SK-N-SH (cell line): ENCODE measurements at regions of chr7 and their contacts with region 1.

Region 1: DNA sequence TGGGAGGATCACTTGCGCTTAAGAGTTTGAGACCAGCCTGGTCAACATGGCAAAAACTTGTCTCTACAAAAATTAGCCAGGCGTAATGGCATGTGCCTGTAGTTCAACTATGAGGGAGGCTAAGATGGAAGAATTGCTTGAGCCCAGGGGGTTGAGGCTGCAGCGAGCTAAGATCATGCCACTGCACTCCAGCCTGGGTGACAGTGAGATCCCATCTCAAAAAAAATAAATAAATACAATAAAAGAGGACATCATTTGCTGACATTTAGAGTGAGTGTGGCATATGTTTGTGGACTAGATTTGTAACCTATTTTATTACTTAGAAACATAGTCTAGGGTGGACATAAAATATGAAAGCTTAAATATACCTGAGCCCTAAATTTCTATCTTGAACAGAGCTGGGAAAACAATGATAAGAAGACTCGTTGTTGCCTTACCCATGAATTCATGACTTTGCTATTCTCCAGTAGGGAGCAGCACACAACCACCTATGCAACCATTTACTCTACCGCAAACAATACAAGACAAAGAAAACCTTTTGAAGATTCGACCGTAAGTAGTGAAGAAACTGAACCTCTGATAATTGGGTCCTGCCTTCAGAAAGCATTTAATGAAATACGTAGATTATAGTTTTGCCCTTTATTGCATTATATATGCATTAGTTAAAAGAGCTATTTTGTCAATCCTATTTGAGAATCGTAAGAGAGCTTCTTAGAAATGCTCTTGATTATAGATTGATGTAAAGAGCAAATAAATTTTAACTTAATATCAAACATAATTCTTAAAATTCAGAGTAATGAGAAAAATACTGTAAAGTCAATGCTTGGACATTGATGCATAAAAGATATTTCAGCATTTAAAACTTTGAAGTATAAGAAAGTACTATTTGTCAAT is 83.5 kb downstream of the GNAT3 start:
- DNase-seq: peak; percentile 37
- H3K4me3 ChIP-seq: no peak overlapping the region
- H3K27ac ChIP-seq: peak overlapping the region in 1 of 2 experiments; percentile 38; a peak in 1 of 4 replicates
- H3K4me1 ChIP-seq: no peaks in the 10 kb centered on the region
- H3K27me3 ChIP-seq: no peaks in the 10 kb centered on the region
- CTCF ChIP-seq: peak; percentile 85
- EP300 ChIP-seq: no peak
- RAD21 ChIP-seq: peak; percentile 93

Region 2: DNA sequence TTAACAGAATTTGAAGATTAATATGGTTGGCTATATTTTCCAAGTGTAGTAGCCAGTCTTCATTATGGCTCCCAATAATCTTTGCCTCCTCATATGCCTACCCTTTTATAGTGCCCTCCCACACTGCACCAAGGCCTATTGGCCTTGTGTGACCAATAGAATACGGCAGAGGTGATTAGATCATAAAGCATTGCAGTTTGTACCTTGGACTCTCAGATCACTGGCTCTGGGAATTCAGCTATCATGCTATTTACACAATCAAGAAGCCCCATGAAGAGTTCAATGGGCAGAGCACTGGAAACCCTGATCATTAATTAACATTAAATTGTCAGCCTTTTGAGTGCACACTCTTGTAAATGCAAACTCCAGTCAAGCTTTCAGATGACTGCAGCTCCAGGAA is 820.4 kb before region 1 on chr7:
- CTCF ChIA-PET with region 1: no interaction called
- POLR2A ChIA-PET with region 1: no interaction called
- DNase-seq: no peak
- H3K4me3 ChIP-seq: no peak overlapping the region
- H3K27ac ChIP-seq: no peak overlapping the region
- H3K4me1 ChIP-seq: peaks cover 5 to 19% of the 10 kb centered on the region in 2 experiments; a peak in 2 of 4 replicates
- H3K27me3 ChIP-seq: no peaks in the 10 kb centered on the region
- CTCF ChIP-seq: no peak
- EP300 ChIP-seq: no peak
- RAD21 ChIP-seq: no peak

Region 3: GRCh38 chr7:80403686-80404241 is 24.6 kb before region 1 on chr7:
- CTCF ChIA-PET with region 1: interaction called, 10 read pairs
- POLR2A ChIA-PET with region 1: no interaction called
- DNase-seq: no peak
- H3K4me3 ChIP-seq: no peak overlapping the region
- H3K27ac ChIP-seq: no peak overlapping the region
- H3K4me1 ChIP-seq: peaks cover 0 to 6% of the 10 kb centered on the region in 2 experiments; a peak in 2 of 4 replicates
- H3K27me3 ChIP-seq: no peaks in the 10 kb centered on the region
- CTCF ChIP-seq: no peak
- EP300 ChIP-seq: no peak
- RAD21 ChIP-seq: no peak

Region 4: GRCh38 chr7:80453699-80454340 is 25.4 kb after region 1 on chr7:
- CTCF ChIA-PET with region 1: interaction called, 17 read pairs
- POLR2A ChIA-PET with region 1: no interaction called
- DNase-seq: peak; percentile 45
- H3K4me3 ChIP-seq: no peak overlapping the region
- H3K27ac ChIP-seq: peak overlapping the region in 1 of 2 experiments; percentile 9; a peak in 1 of 4 replicates
- H3K4me1 ChIP-seq: peaks cover 0 to 5% of the 10 kb centered on the region in 2 experiments; a peak in 2 of 4 replicates
- H3K27me3 ChIP-seq: no peaks in the 10 kb centered on the region
- CTCF ChIP-seq: peak; percentile 93
- EP300 ChIP-seq: no peak
- RAD21 ChIP-seq: peak; percentile 91

Region 5: GRCh38 chr7:80517282-80517747 is 88.9 kb after region 1 on chr7:
- CTCF ChIA-PET with region 1: no interaction called
- POLR2A ChIA-PET with region 1: no interaction called
- DNase-seq: no peak
- H3K4me3 ChIP-seq: no peak overlapping the region
- H3K27ac ChIP-seq: no peak overlapping the region
- H3K4me1 ChIP-seq: no peaks in the 10 kb centered on the region
- H3K27me3 ChIP-seq: no peaks in the 10 kb centered on the region
- CTCF ChIP-seq: no peak
- EP300 ChIP-seq: no peak
- RAD21 ChIP-seq: no peak

Region 6: DNA sequence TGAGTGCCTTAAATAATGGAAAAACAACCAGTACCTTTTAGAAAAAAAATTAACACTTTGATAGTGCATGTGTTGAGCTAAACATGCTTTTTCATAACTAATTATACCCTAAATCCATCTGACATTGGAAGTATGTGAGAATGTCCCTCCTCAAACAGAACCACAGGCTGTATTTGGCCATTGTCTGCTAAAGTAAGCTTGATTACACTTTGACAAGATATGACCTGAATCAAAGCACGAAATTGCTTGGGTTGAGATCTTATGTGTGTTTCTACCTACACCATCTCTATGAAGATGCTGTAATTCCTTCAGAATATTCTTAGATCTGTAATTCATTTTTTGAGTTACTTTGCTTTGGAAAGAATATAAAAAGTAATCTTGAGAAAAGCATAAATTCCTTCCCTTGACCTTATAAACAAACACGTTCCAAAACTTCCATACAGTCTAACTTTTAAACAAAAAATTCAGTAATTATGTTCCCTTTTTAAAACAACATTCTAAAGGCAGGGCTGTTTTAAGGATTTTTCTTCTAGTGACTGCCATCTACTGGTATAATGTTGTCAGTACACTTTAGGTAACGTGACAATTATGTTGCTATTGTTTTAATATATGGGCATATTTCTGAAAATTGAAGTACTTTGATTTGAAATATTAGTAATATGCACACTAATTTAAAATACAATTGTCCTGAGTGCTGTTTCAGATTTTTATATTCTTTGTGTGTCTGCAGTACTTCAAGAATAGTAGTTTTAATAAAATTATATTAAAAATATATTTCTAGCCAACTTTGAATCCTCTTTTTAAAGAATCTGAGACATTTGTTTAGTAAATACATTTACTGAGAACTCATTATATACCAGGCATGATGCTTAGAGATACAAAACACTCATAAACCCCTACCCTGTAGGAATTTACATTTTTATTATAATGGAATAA is 231.0 kb after region 1 on chr7:
- CTCF ChIA-PET with region 1: interaction called, 23 read pairs
- POLR2A ChIA-PET with region 1: no interaction called
- DNase-seq: peak; percentile 31
- H3K4me3 ChIP-seq: no peak overlapping the region; a peak in 1 of 4 replicates
- H3K27ac ChIP-seq: peak overlapping the region in 1 of 2 experiments; percentile 8; a peak in 1 of 4 replicates
- H3K4me1 ChIP-seq: peaks cover 0 to 4% of the 10 kb centered on the region in 2 experiments; a peak in 1 of 4 replicates
- H3K27me3 ChIP-seq: no peaks in the 10 kb centered on the region
- CTCF ChIP-seq: peak; percentile 97
- EP300 ChIP-seq: no peak
- RAD21 ChIP-seq: peak; percentile 80

Region 7: GRCh38 chr7:80681272-80681885 is 253.0 kb after region 1 on chr7:
- CTCF ChIA-PET with region 1: interaction called, 21 read pairs
- POLR2A ChIA-PET with region 1: no interaction called
- DNase-seq: peak; percentile 38
- H3K4me3 ChIP-seq: no peak overlapping the region
- H3K27ac ChIP-seq: no peak overlapping the region
- H3K4me1 ChIP-seq: no peaks in the 10 kb centered on the region
- H3K27me3 ChIP-seq: no peaks in the 10 kb centered on the region
- CTCF ChIP-seq: peak; percentile 80
- EP300 ChIP-seq: no peak
- RAD21 ChIP-seq: peak; percentile 58